Natural killer cell (primary cell): ENCODE measurements at regions of chr7 and their contacts with region 1.

Region 1: DNA sequence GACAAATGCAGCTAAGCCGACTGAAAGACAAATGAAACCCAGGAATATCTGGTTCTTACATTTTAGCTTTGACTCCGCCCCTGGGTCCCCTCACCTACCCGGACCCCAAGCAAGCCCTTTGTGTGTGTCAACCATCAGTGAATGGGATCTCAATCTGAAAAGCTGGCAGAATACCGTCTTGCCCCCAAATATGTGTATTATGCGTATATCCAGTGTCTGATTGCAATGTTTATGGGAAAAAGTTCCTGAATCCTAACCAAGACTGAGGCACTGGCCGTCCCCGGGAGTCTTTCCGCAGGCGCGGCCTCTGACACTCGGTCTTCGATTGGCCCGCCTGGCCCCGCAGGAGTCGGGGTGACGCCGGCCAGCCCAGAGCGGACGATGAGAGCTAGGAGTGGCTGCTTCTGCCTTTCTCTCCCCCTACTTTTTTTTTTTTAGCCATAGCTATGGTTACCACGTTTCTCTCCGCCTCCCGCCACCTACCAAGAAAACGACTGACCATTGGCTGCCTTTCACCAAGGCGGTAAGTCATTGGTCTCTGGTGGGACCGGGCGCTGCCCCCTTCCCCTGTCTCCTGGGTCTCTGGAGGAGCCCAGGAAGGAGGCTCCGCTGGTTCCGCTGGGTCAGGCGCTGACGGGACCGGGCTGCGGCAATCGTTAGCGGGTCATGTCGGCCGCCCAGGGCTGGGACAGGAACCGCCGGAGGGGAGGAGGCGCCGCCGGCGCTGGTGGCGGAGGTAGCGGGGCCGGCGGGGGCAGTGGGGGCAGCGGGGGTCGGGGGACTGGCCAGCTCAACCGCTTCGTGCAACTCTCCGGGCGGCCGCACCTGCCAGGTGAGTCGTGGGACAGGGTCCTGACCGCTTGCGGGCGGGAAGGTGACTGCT is at the start of gene KLHDC10:
- DNase-seq: peak; percentile 91 to 98
- ATAC-seq: peak; percentile 95 to 99 (median 96)
- H3K4me3 ChIP-seq: peak within 1 kb of the TSS; percentile 53
- H3K4me3 Mint-ChIP-seq: peak within 1 kb of the TSS; percentile 97
- H3K27ac ChIP-seq: peak within 1 kb of the TSS; percentile 74
- H3K27ac Mint-ChIP-seq: peak within 1 kb of the TSS; percentile 90 to 95
- H3K4me1 ChIP-seq: peaks cover 11% of the 10 kb centered on the region
- H3K4me1 Mint-ChIP-seq: peaks cover 43% of the 10 kb centered on the region in 2 donors
- H3K27me3 ChIP-seq: no peaks in the 10 kb centered on the region
- H3K27me3 Mint-ChIP-seq: peaks cover 0 to 3% of the 10 kb centered on the region in 2 donors
- CTCF ChIP-seq: no peak
- total RNA-seq, gene KLHDC10: 13.6 to 23.2 (median 21.9) TPM

Region 2: GRCh38 chr7:130141161-130141883 is 71.1 kb after region 1 on chr7:
- intact Hi-C with region 1: loop called (anchors 5 kb)
- DNase-seq: peak in 1 of 2 donors; percentile 58
- ATAC-seq: peak; percentile 11 to 37 (median 14)
- H3K4me3 ChIP-seq: peak overlapping the region; percentile 52
- H3K4me3 Mint-ChIP-seq: peak overlapping the region; percentile 68
- H3K27ac ChIP-seq: peak overlapping the region; percentile 48
- H3K27ac Mint-ChIP-seq: peak overlapping the region in 1 of 2 donors; percentile 79
- H3K4me1 ChIP-seq: peaks cover 18% of the 10 kb centered on the region
- H3K4me1 Mint-ChIP-seq: peaks cover 13 to 31% of the 10 kb centered on the region in 2 donors
- H3K27me3 ChIP-seq: no peaks in the 10 kb centered on the region
- H3K27me3 Mint-ChIP-seq: no peaks in the 10 kb centered on the region
- CTCF ChIP-seq: no peak

Region 3: DNA sequence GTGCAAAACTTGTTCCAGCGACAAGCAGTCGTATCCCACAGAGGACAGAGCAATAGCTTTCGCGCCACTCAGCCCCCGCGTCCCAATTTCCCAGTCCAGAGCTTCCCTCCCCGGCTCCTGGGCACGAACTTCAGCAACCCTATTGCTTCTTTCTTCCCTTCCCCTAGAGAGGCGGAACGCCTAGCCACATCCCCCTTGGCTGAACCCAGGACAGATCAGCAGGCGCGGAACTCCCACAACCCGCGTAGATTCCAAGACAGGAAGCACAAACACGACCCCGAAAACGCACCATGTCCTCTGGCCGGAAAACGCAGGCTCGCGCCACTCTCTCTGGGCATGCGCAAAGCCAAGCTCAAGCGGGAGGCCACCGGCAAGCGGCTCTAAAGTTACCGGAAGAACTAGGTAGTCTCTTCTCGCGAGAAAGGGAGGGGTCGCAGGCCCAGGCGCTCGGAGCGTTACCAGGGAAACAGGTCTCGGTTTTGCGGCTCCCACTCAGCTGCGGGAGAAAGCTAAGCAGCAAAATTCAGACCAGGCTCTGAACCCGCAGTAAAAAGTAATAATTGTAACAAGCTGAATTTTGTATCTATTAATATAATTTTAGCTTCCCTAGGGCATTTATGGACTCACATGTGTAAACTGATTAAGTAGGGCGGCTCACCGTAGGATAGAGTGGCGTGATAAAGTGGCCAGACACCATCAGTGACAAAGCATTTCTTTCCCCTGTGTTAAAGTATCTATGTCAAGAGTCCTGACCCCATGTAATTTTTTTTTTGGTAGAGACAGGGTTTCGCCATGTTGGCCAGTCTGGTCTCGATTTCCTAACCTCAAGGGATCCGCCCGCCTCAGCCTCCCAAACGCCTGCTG is 135.1 kb after region 1 on chr7 and contains the start of gene TMEM209:
- intact Hi-C with region 1: loop called (anchors 5 kb)
- DNase-seq: peak; percentile 87 to 98
- ATAC-seq: peak; percentile 94 to 97 (median 97)
- H3K4me3 ChIP-seq: peak within 1 kb of the TSS; percentile 86
- H3K4me3 Mint-ChIP-seq: peak within 1 kb of the TSS; percentile 100
- H3K27ac ChIP-seq: peak within 1 kb of the TSS; percentile 84
- H3K27ac Mint-ChIP-seq: peak within 1 kb of the TSS; percentile 98 to 99
- H3K4me1 ChIP-seq: peaks cover 9% of the 10 kb centered on the region
- H3K4me1 Mint-ChIP-seq: peaks cover 20 to 22% of the 10 kb centered on the region in 2 donors
- H3K27me3 ChIP-seq: no peaks in the 10 kb centered on the region
- H3K27me3 Mint-ChIP-seq: no peaks in the 10 kb centered on the region
- CTCF ChIP-seq: no peak
- total RNA-seq, gene TMEM209: 26.3 to 31.0 (median 30.4) TPM

Region 4: GRCh38 chr7:130668257-130669084 is 598.3 kb after region 1 on chr7 and contains the start of gene COPG2:
- intact Hi-C with region 1: loop called (anchors 5 kb)
- DNase-seq: peak; percentile 79 to 83
- ATAC-seq: peak; percentile 90 to 95 (median 92)
- H3K4me3 ChIP-seq: peak within 1 kb of the TSS; percentile 78
- H3K4me3 Mint-ChIP-seq: peak within 1 kb of the TSS; percentile 89
- H3K27ac ChIP-seq: peak within 1 kb of the TSS; percentile 49
- H3K27ac Mint-ChIP-seq: peak within 1 kb of the TSS; percentile 72 to 81
- H3K4me1 ChIP-seq: peaks cover 6% of the 10 kb centered on the region
- H3K4me1 Mint-ChIP-seq: peaks cover 17 to 21% of the 10 kb centered on the region in 2 donors
- H3K27me3 ChIP-seq: no peaks in the 10 kb centered on the region
- H3K27me3 Mint-ChIP-seq: peaks cover 6 to 12% of the 10 kb centered on the region in 2 donors
- CTCF ChIP-seq: no peak
- total RNA-seq, gene COPG2: 6.6 to 9.1 (median 8.9) TPM

Region 5: DNA sequence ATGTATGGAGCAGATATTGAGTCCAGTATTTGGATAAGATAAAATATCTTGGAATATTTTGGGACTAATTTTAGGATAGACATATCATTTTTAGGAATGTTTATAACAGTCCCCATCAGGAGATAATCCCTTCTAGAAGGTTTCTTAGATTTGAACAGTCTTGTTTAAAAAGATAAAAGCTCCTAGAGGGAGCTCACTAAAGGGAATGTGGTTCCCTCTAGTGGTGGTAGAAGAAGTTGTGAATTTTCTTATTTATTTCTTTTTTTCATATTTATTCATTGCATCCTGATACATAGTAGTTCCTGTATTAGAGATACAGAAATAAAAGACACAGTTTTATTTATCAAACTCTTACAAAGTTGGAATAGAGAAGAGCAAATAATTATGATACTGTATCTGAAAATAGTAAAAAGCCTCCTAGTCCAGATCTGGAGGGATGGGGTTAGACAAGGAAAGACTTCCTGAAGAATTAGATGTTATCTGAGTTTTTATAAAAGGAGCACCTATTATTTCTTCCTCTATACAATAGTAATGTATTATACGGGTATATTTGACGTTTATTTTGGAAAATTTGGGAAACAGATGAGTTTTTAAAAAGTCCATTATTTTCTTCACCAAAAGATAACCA is 688.3 kb after region 1 on chr7:
- intact Hi-C with region 1: loop called (anchors 1 kb)
- DNase-seq: peak in 1 of 2 donors; percentile 75
- ATAC-seq: peak in 2 of 3 donors; percentile 56 to 58
- H3K4me3 ChIP-seq: no peak overlapping the region
- H3K4me3 Mint-ChIP-seq: no peak overlapping the region
- H3K27ac ChIP-seq: no peak overlapping the region
- H3K27ac Mint-ChIP-seq: no peak overlapping the region
- H3K4me1 ChIP-seq: no peaks in the 10 kb centered on the region
- H3K4me1 Mint-ChIP-seq: no peaks in the 10 kb centered on the region
- H3K27me3 ChIP-seq: no peaks in the 10 kb centered on the region
- H3K27me3 Mint-ChIP-seq: peaks cover 12 to 22% of the 10 kb centered on the region in 2 donors
- CTCF ChIP-seq: peak; percentile 85

Region 6: GRCh38 chr7:130831817-130832481 is 761.7 kb after region 1 on chr7:
- intact Hi-C with region 1: loop called (anchors 1 kb)
- DNase-seq: peak in 1 of 2 donors; percentile 75
- ATAC-seq: peak in 2 of 3 donors; percentile 52 to 58
- H3K4me3 ChIP-seq: no peak overlapping the region
- H3K4me3 Mint-ChIP-seq: no peak overlapping the region
- H3K27ac ChIP-seq: no peak overlapping the region
- H3K27ac Mint-ChIP-seq: no peak overlapping the region
- H3K4me1 ChIP-seq: no peaks in the 10 kb centered on the region
- H3K4me1 Mint-ChIP-seq: no peaks in the 10 kb centered on the region
- H3K27me3 ChIP-seq: no peaks in the 10 kb centered on the region
- H3K27me3 Mint-ChIP-seq: peaks cover 12 to 16% of the 10 kb centered on the region in 2 donors
- CTCF ChIP-seq: peak; percentile 86